Right ventricle myocardium inferior (tissue), 1 donor: ENCODE measurements at regions of chr12 and their contacts with region 1.

Region 1: GRCh38 chr12:104286538-104287482 is 16.7 kb upstream of the EID3 start:
- DNase-seq: peak; percentile 96
- ATAC-seq: peak; percentile 94

Region 2: DNA sequence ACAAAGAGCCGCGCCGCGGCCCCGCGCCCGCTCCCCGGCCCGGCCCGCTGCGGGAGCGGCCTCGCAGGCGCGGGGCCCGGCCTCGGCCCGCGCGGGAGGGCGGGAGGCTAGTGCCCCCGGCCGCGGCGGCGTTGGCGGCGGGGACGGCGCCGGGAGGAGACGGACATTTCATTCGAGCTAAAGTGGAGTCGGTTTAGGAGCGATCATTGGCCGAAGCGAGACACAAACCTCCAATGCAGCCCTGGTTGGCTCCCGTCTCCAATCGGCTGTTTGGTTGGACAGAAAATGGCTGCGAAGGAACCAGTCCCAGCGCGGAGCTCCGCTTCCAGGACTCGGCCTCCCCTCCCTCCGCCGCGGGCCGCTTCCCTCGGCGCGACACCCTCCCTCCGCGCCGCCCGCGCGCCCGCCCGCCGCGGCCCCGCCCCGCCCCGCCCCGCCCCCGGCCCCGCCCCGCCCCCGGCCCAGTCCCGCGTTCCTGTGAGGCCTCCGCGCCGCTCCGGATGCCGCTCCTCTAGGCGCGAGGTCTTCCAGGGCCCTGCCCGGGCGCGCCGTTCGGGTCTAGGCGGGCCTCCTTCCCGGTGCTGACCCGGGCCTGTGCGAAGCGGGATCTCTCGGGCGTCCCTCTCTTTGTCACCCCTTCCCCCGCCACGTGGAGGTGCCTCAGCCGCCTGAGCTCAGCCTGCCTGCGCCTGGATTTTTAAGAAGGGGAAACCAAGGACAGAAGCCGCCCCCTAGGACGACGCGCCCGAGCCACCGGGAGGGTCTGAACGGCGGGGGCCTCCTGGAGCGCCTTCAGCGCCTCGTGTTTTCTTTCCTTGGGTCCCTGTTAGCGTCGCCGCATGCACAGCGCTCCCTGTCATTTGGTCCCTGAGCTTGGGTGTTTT is 148.7 kb before region 1 on chr12 and contains the start of gene NFYB:
- intact Hi-C with region 1: loop called (anchors 5 kb)
- DNase-seq: peak; percentile 97
- ATAC-seq: peak; percentile 94
- total RNA-seq, gene NFYB: 39.8 TPM

Region 3: DNA sequence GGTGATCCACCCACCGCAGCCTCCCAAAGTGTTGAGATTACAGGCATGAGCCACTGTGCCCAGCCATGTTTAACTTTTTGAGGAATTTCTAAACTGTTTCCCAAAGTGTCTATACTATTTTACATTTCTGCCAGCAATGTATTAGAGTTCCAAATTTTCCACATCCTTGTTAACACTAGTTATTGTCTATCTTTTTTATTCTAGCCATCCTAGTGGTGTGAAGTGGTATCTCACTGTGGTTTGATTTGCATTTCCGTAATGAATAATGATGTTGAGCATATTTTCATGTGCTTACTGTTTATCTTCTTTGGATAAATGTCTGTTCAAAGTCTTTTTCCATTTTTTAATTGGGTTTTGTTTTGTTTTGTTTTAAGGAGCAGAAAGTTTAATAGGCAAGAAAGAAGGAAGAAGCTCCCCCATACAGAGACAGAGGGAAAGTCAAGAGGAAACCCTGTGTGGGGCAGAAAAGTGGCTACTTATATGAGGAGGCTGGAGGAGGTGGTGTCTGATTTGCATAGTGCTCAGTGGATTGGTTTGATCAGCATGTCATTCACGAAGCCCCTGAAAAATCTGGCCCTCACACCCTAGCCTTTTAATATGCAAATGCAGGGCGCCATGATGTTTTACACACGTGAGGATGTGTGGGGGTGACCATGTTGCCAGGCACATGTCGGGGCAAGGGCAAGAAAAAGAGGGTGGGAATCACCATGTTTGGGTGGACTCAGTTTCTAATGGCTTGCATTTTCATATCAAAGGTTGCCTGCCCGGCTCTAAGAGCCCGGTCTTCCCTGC is 56.3 kb before region 1 on chr12:
- intact Hi-C with region 1: no loop called
- DNase-seq: no peak
- ATAC-seq: no peak